CD4-positive, alpha-beta T cell (primary cell): ENCODE measurements at regions of chr2 and their contacts with region 1.

Region 1: DNA sequence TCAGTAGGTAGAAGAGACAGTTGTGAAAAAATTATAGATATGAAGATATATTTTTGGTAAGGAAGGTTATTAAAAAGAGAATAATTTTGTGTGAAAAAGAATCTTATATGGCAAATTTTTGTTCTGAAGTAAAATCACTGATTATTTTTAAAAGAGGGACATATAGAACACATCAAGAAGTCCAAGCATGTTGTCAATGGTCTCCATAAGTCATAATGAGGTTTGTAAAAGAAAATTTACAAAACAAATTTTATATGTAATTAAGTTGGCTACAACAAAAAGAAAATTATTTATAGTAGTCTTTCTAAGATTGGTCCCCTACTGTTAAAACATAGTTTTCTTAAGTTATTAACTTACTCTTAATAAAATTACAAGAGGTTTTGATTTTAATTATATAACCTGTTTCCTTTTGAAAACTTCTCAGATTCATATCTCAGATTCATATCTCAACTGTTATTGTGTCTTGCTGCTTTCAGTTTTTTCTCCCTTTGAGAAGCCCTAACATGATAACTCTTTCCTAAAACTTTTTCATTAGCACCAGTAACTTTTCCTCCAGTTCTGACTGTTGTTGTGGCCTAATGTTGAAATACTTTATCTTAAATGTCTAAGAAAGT is 81.2 kb downstream of the SH3YL1 start:
- DNase-seq: no peak
- ATAC-seq: no peak
- H3K4me3 ChIP-seq: no peak overlapping the region
- H3K4me3 Mint-ChIP-seq: no peak overlapping the region
- H3K27ac ChIP-seq: no peak overlapping the region
- H3K27ac Mint-ChIP-seq: peak overlapping the region; percentile 74
- H3K4me1 ChIP-seq: peaks cover 10% of the 10 kb centered on the region
- H3K4me1 Mint-ChIP-seq: peaks cover 45% of the 10 kb centered on the region
- H3K27me3 ChIP-seq: no peaks in the 10 kb centered on the region
- H3K27me3 Mint-ChIP-seq: no peaks in the 10 kb centered on the region
- CTCF ChIP-seq: no peak

Region 2: DNA sequence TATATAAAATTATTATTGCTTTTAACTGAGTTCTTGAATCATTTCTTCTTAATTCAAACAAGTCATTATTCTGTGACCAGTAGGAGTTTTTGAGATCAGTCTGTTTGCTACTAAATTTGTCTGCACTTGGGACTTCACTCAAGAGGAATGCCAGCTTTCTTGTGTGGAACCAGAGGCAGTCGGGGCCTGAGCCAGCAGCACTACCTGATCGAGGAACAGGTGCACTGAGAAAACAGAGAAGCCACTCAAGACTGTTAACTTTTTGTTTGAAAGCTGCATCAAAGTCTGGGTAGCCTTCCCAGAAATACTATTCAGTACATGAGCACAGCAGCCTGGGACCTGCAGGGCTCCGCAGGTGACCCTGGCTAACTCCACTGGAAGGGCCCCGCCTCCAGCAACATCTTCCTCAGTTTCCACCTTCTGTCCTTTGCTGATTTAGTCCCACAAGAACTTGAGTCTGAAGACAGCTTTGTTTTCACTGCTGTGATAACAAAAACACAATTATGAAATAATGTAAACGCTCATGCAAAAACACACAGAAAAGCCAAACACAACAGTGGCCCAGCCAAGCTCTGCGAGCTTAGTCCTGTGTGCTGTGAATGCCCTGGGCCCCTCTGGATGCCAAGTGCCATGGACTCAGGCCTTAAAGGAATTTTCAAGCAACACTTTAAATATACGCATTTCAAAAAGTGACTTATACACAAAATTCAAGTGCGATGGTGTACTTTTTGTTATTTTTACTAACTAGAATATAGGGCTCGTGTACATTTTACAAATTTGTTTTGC is 19.2 kb after region 1 on chr2:
- CTCF ChIA-PET with region 1: no interaction called
- POLR2A ChIA-PET with region 1: interaction called, 13 read pairs
- intact Hi-C with region 1: loop called in 1 of 2 experiments (anchors 2 kb)
- DNase-seq: no peak
- ATAC-seq: no peak
- H3K4me3 ChIP-seq: no peak overlapping the region
- H3K4me3 Mint-ChIP-seq: no peak overlapping the region
- H3K27ac ChIP-seq: no peak overlapping the region
- H3K27ac Mint-ChIP-seq: peak overlapping the region; percentile 50
- H3K4me1 ChIP-seq: peaks cover 10% of the 10 kb centered on the region
- H3K4me1 Mint-ChIP-seq: peaks cover 20% of the 10 kb centered on the region
- H3K27me3 ChIP-seq: no peaks in the 10 kb centered on the region
- H3K27me3 Mint-ChIP-seq: no peaks in the 10 kb centered on the region
- CTCF ChIP-seq: no peak

Region 3: DNA sequence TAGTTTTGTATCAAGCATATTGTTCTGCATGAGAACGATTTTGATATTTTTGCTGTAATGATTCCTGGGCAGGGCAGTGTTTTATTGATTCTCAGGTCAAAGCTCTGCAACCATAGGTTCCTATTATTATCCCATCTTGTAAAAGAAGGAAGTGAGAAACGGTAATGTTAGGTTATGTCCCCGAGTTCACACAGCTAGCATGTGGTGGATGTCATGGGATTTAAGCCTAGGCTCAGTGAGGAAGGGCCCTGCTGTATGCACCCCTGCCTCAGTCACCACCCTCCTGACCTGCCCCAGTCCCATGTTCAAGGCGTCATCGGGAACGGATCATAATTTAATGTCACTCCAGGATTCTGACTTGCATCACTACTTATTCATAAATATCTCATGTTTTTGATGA is 92.8 kb after region 1 on chr2:
- CTCF ChIA-PET with region 1: no interaction called
- POLR2A ChIA-PET with region 1: no interaction called
- intact Hi-C with region 1: no loop called
- DNase-seq: no peak
- ATAC-seq: no peak
- H3K4me3 ChIP-seq: no peak overlapping the region
- H3K4me3 Mint-ChIP-seq: no peak overlapping the region
- H3K27ac ChIP-seq: no peak overlapping the region
- H3K27ac Mint-ChIP-seq: no peak overlapping the region
- H3K4me1 ChIP-seq: no peaks in the 10 kb centered on the region
- H3K4me1 Mint-ChIP-seq: peaks cover 25% of the 10 kb centered on the region
- H3K27me3 ChIP-seq: no peaks in the 10 kb centered on the region
- H3K27me3 Mint-ChIP-seq: no peaks in the 10 kb centered on the region
- CTCF ChIP-seq: no peak

Region 4: GRCh38 chr2:383178-383577 is 200.6 kb after region 1 on chr2:
- CTCF ChIA-PET with region 1: no interaction called
- POLR2A ChIA-PET with region 1: no interaction called
- intact Hi-C with region 1: no loop called
- DNase-seq: no peak
- ATAC-seq: no peak
- H3K4me3 ChIP-seq: no peak overlapping the region
- H3K4me3 Mint-ChIP-seq: no peak overlapping the region
- H3K27ac ChIP-seq: no peak overlapping the region
- H3K27ac Mint-ChIP-seq: no peak overlapping the region
- H3K4me1 ChIP-seq: no peaks in the 10 kb centered on the region
- H3K4me1 Mint-ChIP-seq: no peaks in the 10 kb centered on the region
- H3K27me3 ChIP-seq: peaks cover 0 to 5% of the 10 kb centered on the region in 2 experiments
- H3K27me3 Mint-ChIP-seq: peaks cover 14% of the 10 kb centered on the region
- CTCF ChIP-seq: no peak